T-cell (primary cell): ENCODE measurements at regions of chr4 and their contacts with region 1.

Region 1: DNA sequence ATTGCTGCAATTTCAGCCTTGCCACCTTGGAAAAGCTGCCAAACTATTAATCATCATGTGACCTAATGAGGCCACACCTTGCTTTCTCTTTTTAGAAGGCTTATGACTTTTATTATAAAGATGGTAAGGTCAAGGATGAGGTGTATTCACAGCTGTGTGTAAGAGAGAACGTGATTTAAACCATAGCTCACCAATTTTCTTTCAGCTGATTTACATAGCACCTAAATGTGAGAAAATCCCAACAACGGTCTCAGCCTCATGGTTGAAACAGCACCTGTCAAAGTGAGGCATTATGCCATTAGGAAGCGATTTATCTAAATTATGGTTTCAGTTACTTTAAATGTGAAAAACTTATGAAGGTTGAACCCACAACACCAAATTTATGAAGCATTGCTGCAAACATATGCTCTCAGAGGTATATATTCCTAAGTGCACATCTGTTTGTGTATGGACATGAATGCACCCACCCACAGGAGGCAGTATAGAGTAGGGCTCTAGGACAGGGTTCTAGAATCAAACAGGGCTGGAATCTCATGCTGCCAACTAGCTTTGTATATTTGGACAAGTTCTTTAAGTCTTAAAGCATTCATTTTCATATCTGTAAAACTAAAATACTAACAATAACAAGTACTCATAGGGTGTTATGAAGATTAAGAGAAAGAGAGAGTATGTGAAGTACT is 40.7 kb downstream of the ANXA3 start:
- DNase-seq: peak in 3 of 35 experiments; percentile 3 to 18 (median 8)
- ATAC-seq: no peak
- H3K4me3 ChIP-seq: no peak overlapping the region
- H3K4me3 Mint-ChIP-seq: no peak overlapping the region
- H3K27ac ChIP-seq: no peak overlapping the region
- H3K27ac Mint-ChIP-seq: no peak overlapping the region
- H3K4me1 ChIP-seq: no peaks in the 10 kb centered on the region
- H3K4me1 Mint-ChIP-seq: no peaks in the 10 kb centered on the region
- H3K27me3 ChIP-seq: no peaks in the 10 kb centered on the region
- H3K27me3 Mint-ChIP-seq: no peaks in the 10 kb centered on the region

Region 2: GRCh38 chr4:78737035-78737434 is 144.8 kb after region 1 on chr4:
- CTCF ChIA-PET with region 1: no interaction called
- POLR2A ChIA-PET with region 1: no interaction called
- DNase-seq: no peak
- ATAC-seq: no peak
- H3K4me3 ChIP-seq: no peak overlapping the region
- H3K4me3 Mint-ChIP-seq: no peak overlapping the region
- H3K27ac ChIP-seq: no peak overlapping the region
- H3K27ac Mint-ChIP-seq: no peak overlapping the region
- H3K4me1 ChIP-seq: no peaks in the 10 kb centered on the region
- H3K4me1 Mint-ChIP-seq: peaks cover 0 to 3% (median 0%) of the 10 kb centered on the region in 3 donors
- H3K27me3 ChIP-seq: no peaks in the 10 kb centered on the region
- H3K27me3 Mint-ChIP-seq: no peaks in the 10 kb centered on the region

Region 3: DNA sequence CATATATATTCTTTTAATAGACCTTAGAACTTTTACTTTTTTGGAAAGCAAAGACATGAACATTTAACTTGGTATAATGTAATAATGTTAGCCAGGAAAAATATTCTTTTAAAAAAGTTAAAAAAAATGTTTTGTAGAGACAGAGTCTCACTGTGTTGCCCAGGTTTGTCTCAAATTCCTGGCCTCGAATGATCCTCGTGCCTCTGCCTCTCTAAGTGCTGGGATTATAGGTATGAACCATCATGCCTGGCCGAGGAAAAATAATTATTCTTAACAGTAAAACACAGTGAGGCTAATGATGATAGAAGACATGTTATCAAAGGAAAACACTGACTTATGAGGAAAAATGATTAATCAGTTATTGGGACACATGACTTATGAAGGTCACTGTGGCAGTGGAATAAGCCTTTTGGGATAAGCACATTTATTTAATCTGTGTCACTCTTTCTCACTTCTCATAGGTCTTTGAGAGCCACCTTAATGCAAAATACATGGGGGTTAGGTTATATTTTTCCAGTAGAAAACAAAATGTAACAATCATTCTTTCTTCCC is 177.9 kb after region 1 on chr4:
- CTCF ChIA-PET with region 1: no interaction called
- POLR2A ChIA-PET with region 1: interaction called in 1 of 2 experiments, 13 read pairs
- DNase-seq: no peak
- ATAC-seq: no peak
- H3K4me3 ChIP-seq: no peak overlapping the region
- H3K4me3 Mint-ChIP-seq: no peak overlapping the region
- H3K27ac ChIP-seq: no peak overlapping the region
- H3K27ac Mint-ChIP-seq: no peak overlapping the region
- H3K4me1 ChIP-seq: peaks cover 3 to 4% of the 10 kb centered on the region in 2 experiments
- H3K4me1 Mint-ChIP-seq: peaks cover 0 to 11% (median 10%) of the 10 kb centered on the region in 3 donors
- H3K27me3 ChIP-seq: no peaks in the 10 kb centered on the region
- H3K27me3 Mint-ChIP-seq: no peaks in the 10 kb centered on the region

Region 4: DNA sequence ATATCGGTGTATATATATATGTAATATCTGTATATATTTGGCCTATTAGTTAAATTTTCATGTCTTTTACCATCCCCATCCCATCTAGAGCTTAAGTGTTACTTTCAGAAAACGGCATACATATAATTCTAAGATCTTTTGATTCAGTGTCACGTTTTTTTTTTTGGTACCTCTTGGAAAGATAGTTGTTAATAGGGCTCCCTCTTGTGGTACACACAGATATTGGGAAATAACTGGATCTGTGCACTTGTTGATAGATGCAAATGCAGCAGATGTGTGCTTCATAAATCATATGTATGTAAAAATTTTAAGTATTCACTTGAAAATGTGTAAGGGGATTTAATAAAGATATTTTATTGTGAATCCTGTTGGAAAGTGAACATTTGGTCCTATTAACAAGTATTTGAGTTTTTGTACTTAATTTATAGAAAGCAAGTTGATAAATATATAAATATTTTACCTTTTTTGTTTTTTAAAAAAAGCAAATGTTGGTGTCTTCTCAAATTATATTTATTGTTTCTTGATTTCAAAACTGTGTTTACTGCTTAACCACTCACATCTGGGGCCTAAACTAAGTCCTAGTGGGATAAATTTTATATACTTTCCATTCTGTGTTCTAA is 272.3 kb after region 1 on chr4:
- CTCF ChIA-PET with region 1: interaction called in 1 of 2 experiments, 11 read pairs
- POLR2A ChIA-PET with region 1: no interaction called
- DNase-seq: peak in 11 of 35 experiments; percentile 2 to 79 (median 15)
- ATAC-seq: peak in 3 of 4 experiments; percentile 38 to 59 (median 48)
- H3K4me3 ChIP-seq: no peak overlapping the region
- H3K4me3 Mint-ChIP-seq: no peak overlapping the region
- H3K27ac ChIP-seq: no peak overlapping the region
- H3K27ac Mint-ChIP-seq: no peak overlapping the region
- H3K4me1 ChIP-seq: no peaks in the 10 kb centered on the region
- H3K4me1 Mint-ChIP-seq: peaks cover 0 to 2% (median 1%) of the 10 kb centered on the region in 3 donors
- H3K27me3 ChIP-seq: no peaks in the 10 kb centered on the region
- H3K27me3 Mint-ChIP-seq: no peaks in the 10 kb centered on the region